ENCODE measurements at regions of chr7 and their contacts with region 1.

Region 1: DNA sequence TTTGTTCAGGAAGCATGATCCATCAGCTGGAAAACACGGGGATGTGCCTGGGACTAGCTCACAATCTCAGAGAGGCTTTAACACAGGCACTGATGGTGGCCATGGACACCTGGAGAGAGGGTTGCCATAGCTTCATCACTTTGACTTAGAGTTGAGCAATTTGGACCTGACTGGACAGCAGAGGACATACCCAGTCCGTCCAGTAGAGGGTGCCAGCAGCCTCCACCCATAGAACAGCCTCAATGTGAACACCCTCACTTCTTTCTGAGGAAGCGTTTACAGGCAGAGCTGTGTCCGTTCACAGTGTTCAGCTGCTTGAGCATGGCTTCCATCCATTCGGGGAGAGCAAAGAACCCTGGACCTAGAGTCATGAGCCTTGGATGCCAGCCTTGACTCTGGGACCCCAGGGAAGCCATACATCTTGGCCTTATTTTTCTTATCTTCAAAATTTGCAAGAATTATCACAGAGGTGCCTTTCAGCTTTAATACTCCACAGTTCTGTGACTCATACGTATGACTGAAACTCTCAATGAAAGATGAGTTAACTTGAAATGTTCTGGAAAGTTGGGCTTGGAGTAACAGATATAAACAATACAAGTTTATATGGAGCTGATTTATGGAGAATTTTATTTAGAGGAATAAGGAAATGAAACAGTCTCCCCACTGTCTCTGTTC is 302.9 kb upstream of the PODXL start:
- DNase-seq: peak in 9 of 14 experiments; percentile 6 to 40 (median 12)
- ATAC-seq: no peak
- H3K4me3 ChIP-seq: no peak overlapping the region
- H3K4me3 Mint-ChIP-seq: no peak overlapping the region
- H3K27ac ChIP-seq: no peak overlapping the region
- H3K27ac Mint-ChIP-seq: no peak overlapping the region
- H3K4me1 ChIP-seq: no peaks in the 10 kb centered on the region
- H3K4me1 Mint-ChIP-seq: no peaks in the 10 kb centered on the region
- H3K27me3 ChIP-seq: no peaks in the 10 kb centered on the region
- H3K27me3 Mint-ChIP-seq: peaks cover 6% of the 10 kb centered on the region
- CTCF ChIP-seq: peak; percentile 68

Region 2: DNA sequence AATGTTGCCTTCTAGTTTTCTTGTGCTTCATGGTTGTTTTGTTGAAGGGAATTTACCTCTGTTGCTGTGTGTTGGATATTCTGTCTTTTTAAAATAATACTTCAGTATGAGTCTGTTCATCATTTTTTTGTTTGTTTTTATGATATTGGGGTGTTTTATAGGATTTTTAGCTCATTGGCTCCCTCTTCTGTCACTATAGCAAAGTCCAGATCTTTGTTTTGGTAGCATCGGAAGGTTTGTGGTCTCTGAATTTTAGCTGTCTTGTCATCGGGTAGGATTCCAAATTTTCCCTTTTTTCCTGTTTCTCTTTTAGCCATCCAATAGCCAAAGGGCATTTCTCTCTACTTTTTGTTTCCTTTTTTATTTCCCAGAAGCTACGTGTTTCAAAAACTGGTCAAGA is 1485.0 kb after region 1 on chr7:
- CTCF ChIA-PET with region 1: no interaction called
- POLR2A ChIA-PET with region 1: no interaction called
- intact Hi-C with region 1: loop called in 1 of 2 experiments (anchors 10 kb)
- DNase-seq: peak in 1 of 14 experiments; percentile 2
- ATAC-seq: no peak
- H3K4me3 ChIP-seq: no peak overlapping the region
- H3K4me3 Mint-ChIP-seq: no peak overlapping the region
- H3K27ac ChIP-seq: no peak overlapping the region
- H3K27ac Mint-ChIP-seq: no peak overlapping the region
- H3K4me1 ChIP-seq: no peaks in the 10 kb centered on the region
- H3K4me1 Mint-ChIP-seq: peaks cover 13% of the 10 kb centered on the region
- H3K27me3 ChIP-seq: no peaks in the 10 kb centered on the region
- H3K27me3 Mint-ChIP-seq: no peaks in the 10 kb centered on the region
- CTCF ChIP-seq: no peak